ENCODE measurements at regions of chr14 and their contacts with region 1.

Region 1: DNA sequence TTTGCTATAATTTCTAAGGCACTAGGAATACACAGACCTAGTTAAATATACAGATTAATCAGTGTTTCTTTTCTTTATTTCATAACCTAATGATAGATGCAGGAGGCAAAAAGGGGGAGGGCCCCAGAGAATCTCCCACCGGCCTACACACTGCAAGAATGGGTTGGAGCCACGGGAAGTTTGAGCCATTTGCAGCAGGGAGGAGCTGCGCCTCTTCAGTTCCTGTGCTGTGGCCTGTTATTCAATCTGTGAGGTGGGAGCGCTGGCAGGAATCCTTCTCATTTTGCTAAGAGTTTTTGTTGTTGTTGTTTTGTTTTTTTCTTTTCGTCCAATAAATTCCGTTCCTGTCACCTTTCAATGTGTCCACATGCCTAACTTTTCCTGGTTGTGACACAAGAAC is 251.3 kb upstream of the RPL10L start:
- DNase-seq: no peak
- H3K4me3 ChIP-seq: no peak overlapping the region
- CTCF ChIP-seq: no peak
- POLR2A ChIP-seq: no peak

Region 2: GRCh38 chr14:46920542-46920941 is 17.7 kb after region 1 on chr14:
- intact Hi-C with region 1: loop called (anchors 1 kb)
- DNase-seq: no peak
- H3K4me3 ChIP-seq: no peak overlapping the region
- CTCF ChIP-seq: no peak
- POLR2A ChIP-seq: no peak

Region 3: DNA sequence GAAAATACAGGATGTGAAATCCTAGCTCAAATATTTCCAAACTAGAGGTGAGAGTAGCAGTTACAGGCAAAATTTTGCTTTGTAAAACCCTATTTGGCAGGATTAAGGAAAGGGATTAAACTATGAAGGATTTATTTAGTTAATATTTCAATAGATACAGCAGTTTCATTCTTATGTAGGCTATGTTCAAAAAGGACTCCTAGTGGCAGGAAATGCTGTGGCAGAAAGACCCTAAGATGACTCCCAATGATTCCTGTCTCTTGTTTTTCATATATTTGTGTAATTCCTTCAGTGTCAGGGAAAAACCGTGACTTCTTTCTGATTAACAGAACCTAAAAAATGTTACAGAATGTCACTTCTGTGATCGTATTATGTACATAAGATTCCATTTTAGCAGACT is 48.3 kb after region 1 on chr14:
- intact Hi-C with region 1: no loop called
- DNase-seq: no peak
- H3K4me3 ChIP-seq: no peak overlapping the region
- CTCF ChIP-seq: no peak
- POLR2A ChIP-seq: no peak